ENCODE measurements at regions of chr1 and their contacts with region 1.

Region 1: DNA sequence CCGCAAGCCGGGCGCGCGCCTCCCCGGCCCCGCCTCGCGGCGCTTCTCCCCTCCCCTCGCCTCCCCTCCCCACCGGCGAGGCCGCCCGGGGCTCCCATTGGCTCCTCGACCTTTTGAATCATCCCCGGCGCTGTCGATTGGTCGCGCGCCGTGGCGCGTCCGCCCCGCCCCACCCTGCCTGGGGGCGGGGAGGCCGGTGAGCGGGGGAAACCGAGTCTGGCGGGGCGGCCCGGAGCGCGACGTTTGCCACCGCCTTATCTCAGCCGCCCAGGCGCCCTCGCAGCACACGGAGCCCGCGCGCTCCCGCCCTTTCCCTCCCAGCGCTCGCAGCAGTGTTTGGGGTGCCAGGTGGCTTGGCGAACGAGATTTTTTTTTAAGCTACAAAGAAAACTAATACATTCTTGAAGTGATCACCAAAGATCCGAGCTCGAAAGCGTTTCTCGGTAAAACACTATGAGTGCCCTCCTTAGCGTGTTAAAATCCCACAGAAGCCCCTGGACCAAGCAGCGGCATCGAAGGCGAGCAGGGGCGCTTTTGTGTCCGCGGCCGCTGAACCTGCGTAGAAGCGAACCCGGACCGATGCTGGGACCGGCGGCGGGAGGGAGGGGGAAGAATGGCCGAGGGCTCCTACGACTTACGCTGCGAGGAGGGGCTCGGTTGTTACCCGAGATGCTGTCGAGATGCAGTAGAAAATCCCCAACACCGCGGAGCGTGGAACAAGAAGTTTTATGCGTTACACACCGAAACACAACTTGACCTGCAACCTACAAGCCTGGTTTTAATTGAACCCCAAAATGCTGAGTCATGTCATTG is 436 bp upstream of the LBR start:
- DNase-seq: peak; percentile 91 to 92 (median 91)
- H3K4me3 ChIP-seq: peak overlapping the region; percentile 68 to 75
- H3K4me3 Mint-ChIP-seq: peak overlapping the region; percentile 84 to 97 (median 92)
- H3K27ac ChIP-seq: peak overlapping the region; percentile 78
- H3K27ac Mint-ChIP-seq: peak overlapping the region; percentile 86 to 97 (median 96)
- H3K4me1 ChIP-seq: peaks cover 41% of the 10 kb centered on the region
- H3K4me1 Mint-ChIP-seq: peaks cover 38 to 49% (median 44%) of the 10 kb centered on the region in 4 donors
- H3K27me3 ChIP-seq: no peaks in the 10 kb centered on the region
- H3K27me3 Mint-ChIP-seq: no peaks in the 10 kb centered on the region

Region 2: DNA sequence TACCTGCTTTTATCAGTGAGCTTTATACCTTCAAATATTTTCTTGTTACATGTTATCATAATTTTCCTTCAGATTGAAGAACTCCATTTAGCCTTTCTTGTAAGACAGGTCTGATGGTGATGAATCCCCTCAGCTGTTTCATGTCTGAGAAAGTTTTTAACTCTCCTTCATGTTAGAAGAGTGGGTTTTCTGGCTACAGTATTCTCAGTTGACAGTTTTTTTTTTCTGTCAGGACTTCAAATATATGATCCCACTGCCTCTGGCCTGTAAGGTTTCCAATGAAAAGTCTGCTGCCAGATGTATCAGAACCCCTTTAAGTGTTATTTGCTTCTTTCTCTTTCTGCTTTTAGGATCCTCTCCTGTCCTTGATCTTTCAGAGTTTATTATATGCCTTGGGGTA is 248.6 kb before region 1 on chr1:
- CTCF ChIA-PET with region 1: no interaction called
- POLR2A ChIA-PET with region 1: no interaction called
- intact Hi-C with region 1: no loop called
- DNase-seq: no peak
- H3K4me3 ChIP-seq: no peak overlapping the region
- H3K4me3 Mint-ChIP-seq: no peak overlapping the region
- H3K27ac ChIP-seq: no peak overlapping the region
- H3K27ac Mint-ChIP-seq: no peak overlapping the region
- H3K4me1 ChIP-seq: no peaks in the 10 kb centered on the region
- H3K4me1 Mint-ChIP-seq: no peaks in the 10 kb centered on the region
- H3K27me3 ChIP-seq: no peaks in the 10 kb centered on the region
- H3K27me3 Mint-ChIP-seq: peaks cover 4 to 10% of the 10 kb centered on the region in 2 donors

Region 3: DNA sequence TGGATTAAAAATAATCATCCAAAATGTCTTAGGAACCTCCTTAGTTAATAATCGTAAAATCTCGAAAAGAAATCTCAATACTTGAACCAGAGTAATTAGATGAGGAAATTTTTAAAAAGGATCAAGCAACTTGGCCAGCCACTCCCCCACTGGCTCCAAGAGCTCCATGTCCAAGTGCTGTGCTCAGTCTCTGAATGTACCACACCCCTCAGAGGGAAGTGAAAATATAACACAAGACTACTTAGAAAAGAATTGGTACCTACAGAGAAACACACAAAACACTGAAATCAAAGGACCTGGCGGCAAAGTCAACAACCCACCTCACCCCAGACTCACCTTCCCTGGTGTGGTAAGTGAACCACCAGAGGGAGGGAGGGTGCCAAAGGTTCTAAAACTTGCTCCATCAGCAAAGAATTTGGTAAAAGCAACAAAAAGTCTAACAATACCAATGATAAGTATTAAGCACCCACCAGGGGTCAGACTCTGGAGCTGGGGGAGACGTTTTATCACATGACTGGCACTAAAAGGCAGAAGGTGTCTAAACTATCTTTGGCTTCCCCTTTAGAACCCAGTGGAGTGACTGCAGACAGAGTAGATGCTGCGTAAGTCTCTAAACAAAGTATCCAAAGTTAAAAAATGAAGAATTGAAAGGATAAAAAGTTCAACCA is 14.4 kb before region 1 on chr1:
- CTCF ChIA-PET with region 1: interaction called, 3 read pairs
- POLR2A ChIA-PET with region 1: interaction called, 32 read pairs
- intact Hi-C with region 1: no loop called
- DNase-seq: no peak
- H3K4me3 ChIP-seq: no peak overlapping the region
- H3K4me3 Mint-ChIP-seq: no peak overlapping the region
- H3K27ac ChIP-seq: no peak overlapping the region
- H3K27ac Mint-ChIP-seq: peak overlapping the region in 1 of 7 donors; percentile 23
- H3K4me1 ChIP-seq: no peaks in the 10 kb centered on the region
- H3K4me1 Mint-ChIP-seq: peaks cover 6 to 15% (median 11%) of the 10 kb centered on the region in 4 donors
- H3K27me3 ChIP-seq: no peaks in the 10 kb centered on the region
- H3K27me3 Mint-ChIP-seq: no peaks in the 10 kb centered on the region

Region 4: GRCh38 chr1:225441314-225442122 is 13.2 kb after region 1 on chr1:
- CTCF ChIA-PET with region 1: interaction called, 87 read pairs
- POLR2A ChIA-PET with region 1: interaction called, 319 read pairs
- intact Hi-C with region 1: loop called (anchors 1 kb)
- DNase-seq: no peak
- H3K4me3 ChIP-seq: no peak overlapping the region
- H3K4me3 Mint-ChIP-seq: peak overlapping the region; percentile 13 to 75 (median 41)
- H3K27ac ChIP-seq: peak overlapping the region; percentile 31
- H3K27ac Mint-ChIP-seq: peak overlapping the region; percentile 25 to 84 (median 49)
- H3K4me1 ChIP-seq: peaks cover 52% of the 10 kb centered on the region
- H3K4me1 Mint-ChIP-seq: peaks cover 40 to 60% (median 53%) of the 10 kb centered on the region in 4 donors
- H3K27me3 ChIP-seq: no peaks in the 10 kb centered on the region
- H3K27me3 Mint-ChIP-seq: no peaks in the 10 kb centered on the region

Region 5: GRCh38 chr1:225447650-225448089 is 19.4 kb after region 1 on chr1:
- CTCF ChIA-PET with region 1: interaction called, 87 read pairs
- POLR2A ChIA-PET with region 1: interaction called, 319 read pairs
- intact Hi-C with region 1: loop called (anchors 1 kb)
- DNase-seq: no peak
- H3K4me3 ChIP-seq: no peak overlapping the region
- H3K4me3 Mint-ChIP-seq: no peak overlapping the region
- H3K27ac ChIP-seq: no peak overlapping the region
- H3K27ac Mint-ChIP-seq: peak overlapping the region in 1 of 7 donors; percentile 17
- H3K4me1 ChIP-seq: peaks cover 47% of the 10 kb centered on the region
- H3K4me1 Mint-ChIP-seq: peaks cover 29 to 55% (median 43%) of the 10 kb centered on the region in 4 donors
- H3K27me3 ChIP-seq: no peaks in the 10 kb centered on the region
- H3K27me3 Mint-ChIP-seq: no peaks in the 10 kb centered on the region

Region 6: GRCh38 chr1:225460737-225461562 is 32.7 kb after region 1 on chr1:
- CTCF ChIA-PET with region 1: no interaction called
- POLR2A ChIA-PET with region 1: interaction called, 21 read pairs
- intact Hi-C with region 1: no loop called
- DNase-seq: peak; percentile 24 to 75 (median 35)
- H3K4me3 ChIP-seq: no peak overlapping the region
- H3K4me3 Mint-ChIP-seq: peak overlapping the region in 4 of 8 donors; percentile 0 to 57 (median 33)
- H3K27ac ChIP-seq: peak overlapping the region; percentile 8
- H3K27ac Mint-ChIP-seq: peak overlapping the region in 6 of 7 donors; percentile 39 to 91 (median 76)
- H3K4me1 ChIP-seq: peaks cover 36% of the 10 kb centered on the region
- H3K4me1 Mint-ChIP-seq: peaks cover 20 to 51% (median 39%) of the 10 kb centered on the region in 4 donors
- H3K27me3 ChIP-seq: no peaks in the 10 kb centered on the region
- H3K27me3 Mint-ChIP-seq: no peaks in the 10 kb centered on the region

Region 7: GRCh38 chr1:225881969-225882693 is 453.9 kb after region 1 on chr1 and contains the start of gene TMEM63A:
- CTCF ChIA-PET with region 1: no interaction called
- POLR2A ChIA-PET with region 1: interaction called, 21 read pairs
- intact Hi-C with region 1: no loop called
- DNase-seq: peak; percentile 86 to 92 (median 88)
- H3K4me3 ChIP-seq: peak within 1 kb of the TSS; percentile 89 to 98
- H3K4me3 Mint-ChIP-seq: peak within 1 kb of the TSS; percentile 95 to 99 (median 98)
- H3K27ac ChIP-seq: peak within 1 kb of the TSS; percentile 84
- H3K27ac Mint-ChIP-seq: peak within 1 kb of the TSS; percentile 93 to 97 (median 96)
- H3K4me1 ChIP-seq: peaks cover 48% of the 10 kb centered on the region
- H3K4me1 Mint-ChIP-seq: peaks cover 37 to 57% (median 46%) of the 10 kb centered on the region in 4 donors
- H3K27me3 ChIP-seq: no peaks in the 10 kb centered on the region
- H3K27me3 Mint-ChIP-seq: no peaks in the 10 kb centered on the region
- total RNA-seq, gene TMEM63A: 476 to 507 TPM

Region 8: GRCh38 chr1:225923692-225924555 is 495.6 kb after region 1 on chr1 and contains the start of gene PYCR2:
- CTCF ChIA-PET with region 1: no interaction called
- POLR2A ChIA-PET with region 1: interaction called, 3 read pairs
- intact Hi-C with region 1: loop called (anchors 1 kb)
- DNase-seq: peak; percentile 93 to 96 (median 95)
- H3K4me3 ChIP-seq: peak within 1 kb of the TSS; percentile 94 to 96
- H3K4me3 Mint-ChIP-seq: peak within 1 kb of the TSS; percentile 90 to 97 (median 94)
- H3K27ac ChIP-seq: peak within 1 kb of the TSS; percentile 85
- H3K27ac Mint-ChIP-seq: peak within 1 kb of the TSS; percentile 90 to 97 (median 95)
- H3K4me1 ChIP-seq: peaks cover 68% of the 10 kb centered on the region
- H3K4me1 Mint-ChIP-seq: peaks cover 13 to 52% (median 28%) of the 10 kb centered on the region in 4 donors
- H3K27me3 ChIP-seq: no peaks in the 10 kb centered on the region
- H3K27me3 Mint-ChIP-seq: no peaks in the 10 kb centered on the region
- total RNA-seq, gene PYCR2: 102 to 116 TPM

Measured in CD4-positive, alpha-beta memory T cell (primary cell).